PC-3 (cell line): ENCODE measurements at regions of chr3 and their contacts with region 1.

Region 1: DNA sequence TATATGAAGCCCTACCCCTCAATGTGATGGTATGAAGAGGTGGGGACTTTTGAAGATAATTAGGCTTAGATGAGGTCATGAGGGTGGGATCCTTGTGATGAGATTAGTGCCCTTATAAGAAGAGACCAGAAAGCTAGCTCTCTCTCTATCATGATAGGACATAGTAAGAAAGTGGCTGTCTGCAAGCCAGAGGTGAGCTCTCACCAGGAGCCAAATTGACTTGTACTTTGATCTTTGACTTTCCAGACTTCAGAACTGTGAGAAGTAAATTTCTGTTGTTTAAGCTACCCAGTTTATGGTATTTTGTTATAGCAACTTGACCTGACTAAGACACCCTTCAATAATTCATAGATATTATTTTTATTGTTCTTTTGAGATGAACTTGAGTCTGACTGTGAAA is 29.9 kb upstream of the MRPL3 start:
- DNase-seq: no peak
- ATAC-seq: no peak
- H3K4me3 ChIP-seq: no peak overlapping the region
- H3K27ac ChIP-seq: no peak overlapping the region
- H3K4me1 ChIP-seq: peaks cover 20% of the 10 kb centered on the region
- H3K27me3 ChIP-seq: no peaks in the 10 kb centered on the region
- CTCF ChIP-seq: no peak

Region 2: GRCh38 chr3:130905551-130905950 is 627.1 kb before region 1 on chr3:
- CTCF ChIA-PET with region 1: no interaction called
- POLR2A ChIA-PET with region 1: no interaction called
- intact Hi-C with region 1: no loop called
- DNase-seq: peak; percentile 61
- ATAC-seq: peak; percentile 95
- H3K4me3 ChIP-seq: no peak overlapping the region; the same call in 1 of the 2 replicates
- H3K27ac ChIP-seq: peak overlapping the region; percentile 92
- H3K4me1 ChIP-seq: peaks cover 32% of the 10 kb centered on the region
- H3K27me3 ChIP-seq: no peaks in the 10 kb centered on the region
- CTCF ChIP-seq: no peak

Region 3: GRCh38 chr3:131370935-131371687 is 161.5 kb before region 1 on chr3:
- CTCF ChIA-PET with region 1: no interaction called
- POLR2A ChIA-PET with region 1: no interaction called
- intact Hi-C with region 1: no loop called
- DNase-seq: no peak
- ATAC-seq: no peak
- H3K4me3 ChIP-seq: no peak overlapping the region
- H3K27ac ChIP-seq: no peak overlapping the region
- H3K4me1 ChIP-seq: no peaks in the 10 kb centered on the region
- H3K27me3 ChIP-seq: no peaks in the 10 kb centered on the region
- CTCF ChIP-seq: no peak

Region 4: GRCh38 chr3:131494706-131495105 is 37.9 kb before region 1 on chr3:
- CTCF ChIA-PET with region 1: no interaction called
- POLR2A ChIA-PET with region 1: no interaction called
- intact Hi-C with region 1: no loop called
- DNase-seq: no peak
- ATAC-seq: no peak
- H3K4me3 ChIP-seq: no peak overlapping the region
- H3K27ac ChIP-seq: no peak overlapping the region
- H3K4me1 ChIP-seq: no peaks in the 10 kb centered on the region
- H3K27me3 ChIP-seq: no peaks in the 10 kb centered on the region
- CTCF ChIP-seq: no peak

Region 5: GRCh38 chr3:131591394-131592014 is 58.9 kb after region 1 on chr3:
- CTCF ChIA-PET with region 1: no interaction called
- POLR2A ChIA-PET with region 1: no interaction called
- intact Hi-C with region 1: loop called (anchors 5 kb)
- DNase-seq: peak; percentile 47
- ATAC-seq: peak; percentile 84
- H3K4me3 ChIP-seq: no peak overlapping the region
- H3K27ac ChIP-seq: no peak overlapping the region
- H3K4me1 ChIP-seq: peaks cover 11% of the 10 kb centered on the region
- H3K27me3 ChIP-seq: no peaks in the 10 kb centered on the region
- CTCF ChIP-seq: no peak